Naive thymus-derived CD4-positive, alpha-beta T cell (primary cell): ENCODE measurements at regions of chr19 and their contacts with region 1.

Region 1: GRCh38 chr19:38315657-38316476 is at the start of gene YIF1B:
- DNase-seq: peak; percentile 93 to 97 (median 95)
- ATAC-seq: peak; percentile 95
- H3K4me3 ChIP-seq: peak within 1 kb of the TSS; percentile 90
- H3K4me3 Mint-ChIP-seq: peak within 1 kb of the TSS; percentile 87 to 96 (median 91)
- H3K27ac ChIP-seq: peak within 1 kb of the TSS; percentile 97
- H3K27ac Mint-ChIP-seq: peak within 1 kb of the TSS; percentile 90 to 97 (median 93)
- H3K4me1 ChIP-seq: peaks cover 14 to 30% of the 10 kb centered on the region in 2 donors
- H3K4me1 Mint-ChIP-seq: peaks cover 29 to 57% (median 48%) of the 10 kb centered on the region in 7 donors
- H3K27me3 ChIP-seq: no peaks in the 10 kb centered on the region
- H3K27me3 Mint-ChIP-seq: no peaks in the 10 kb centered on the region
- total RNA-seq, gene YIF1B: 26.1 to 84.7 (median 38.0) TPM

Region 2: GRCh38 chr19:38049105-38049649 is 266.7 kb before region 1 on chr19:
- CTCF ChIA-PET with region 1: no interaction called
- POLR2A ChIA-PET with region 1: no interaction called
- intact Hi-C with region 1: loop called (anchors 5 kb)
- DNase-seq: peak; percentile 20 to 87 (median 82)
- ATAC-seq: peak; percentile 89
- H3K4me3 ChIP-seq: peak overlapping the region; percentile 19
- H3K4me3 Mint-ChIP-seq: peak overlapping the region; percentile 71 to 91 (median 85)
- H3K27ac ChIP-seq: peak overlapping the region; percentile 74
- H3K27ac Mint-ChIP-seq: peak overlapping the region; percentile 94 to 100 (median 97)
- H3K4me1 ChIP-seq: peaks cover 20 to 36% of the 10 kb centered on the region in 2 donors
- H3K4me1 Mint-ChIP-seq: peaks cover 22 to 56% (median 44%) of the 10 kb centered on the region in 7 donors
- H3K27me3 ChIP-seq: no peaks in the 10 kb centered on the region
- H3K27me3 Mint-ChIP-seq: peaks cover 0 to 2% (median 0%) of the 10 kb centered on the region in 5 donors

Region 3: GRCh38 chr19:38255383-38256014 is 60.4 kb before region 1 on chr19:
- CTCF ChIA-PET with region 1: no interaction called
- POLR2A ChIA-PET with region 1: no interaction called
- intact Hi-C with region 1: loop called in 1 of 2 experiments (anchors 2 kb)
- DNase-seq: peak in 1 of 9 donors; percentile 30
- ATAC-seq: peak; percentile 10
- H3K4me3 ChIP-seq: no peak overlapping the region
- H3K4me3 Mint-ChIP-seq: peak overlapping the region in 1 of 10 donors; percentile 87
- H3K27ac ChIP-seq: no peak overlapping the region
- H3K27ac Mint-ChIP-seq: peak overlapping the region in 1 of 9 donors; percentile 58
- H3K4me1 ChIP-seq: no peaks in the 10 kb centered on the region
- H3K4me1 Mint-ChIP-seq: peaks cover 0 to 37% (median 0%) of the 10 kb centered on the region in 7 donors
- H3K27me3 ChIP-seq: no peaks in the 10 kb centered on the region
- H3K27me3 Mint-ChIP-seq: peaks cover 12 to 33% (median 24%) of the 10 kb centered on the region in 5 donors

Region 4: GRCh38 chr19:38361633-38362075 is 45.8 kb after region 1 on chr19:
- CTCF ChIA-PET with region 1: no interaction called
- POLR2A ChIA-PET with region 1: no interaction called
- intact Hi-C with region 1: loop called in 1 of 2 experiments (anchors 1 kb)
- DNase-seq: peak in 8 of 9 donors; percentile 17 to 80 (median 34)
- ATAC-seq: peak; percentile 83
- H3K4me3 ChIP-seq: peak overlapping the region; percentile 55
- H3K4me3 Mint-ChIP-seq: peak overlapping the region; percentile 62 to 94 (median 83)
- H3K27ac ChIP-seq: no peak overlapping the region
- H3K27ac Mint-ChIP-seq: no peak overlapping the region
- H3K4me1 ChIP-seq: peaks cover 0 to 6% of the 10 kb centered on the region in 2 donors
- H3K4me1 Mint-ChIP-seq: peaks cover 0 to 21% (median 15%) of the 10 kb centered on the region in 7 donors
- H3K27me3 ChIP-seq: no peaks in the 10 kb centered on the region
- H3K27me3 Mint-ChIP-seq: peaks cover 0 to 38% (median 6%) of the 10 kb centered on the region in 5 donors

Region 5: DNA sequence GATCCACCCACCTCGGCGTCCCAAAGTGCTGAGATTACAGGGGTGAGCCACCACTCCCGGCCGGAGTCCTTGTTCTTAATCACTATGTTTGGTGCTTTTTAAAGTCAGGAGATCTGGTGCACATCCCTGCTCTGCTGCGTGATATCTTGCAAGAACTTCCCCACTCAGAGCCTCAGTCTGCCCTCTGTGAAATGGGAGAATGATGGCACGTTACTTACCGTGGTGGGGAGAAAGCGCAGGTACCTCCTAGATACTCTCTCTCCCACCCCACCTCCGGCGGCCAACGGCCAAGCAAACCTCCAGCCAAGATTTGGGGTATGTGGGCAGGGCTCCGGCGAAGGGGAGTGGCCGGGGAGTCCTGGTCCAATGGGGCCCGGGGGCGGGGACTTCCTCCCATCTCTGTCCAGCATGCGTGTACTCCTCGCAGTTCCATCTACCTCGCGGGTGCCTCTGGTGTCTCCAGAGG is 117.4 kb after region 1 on chr19 and contains the start of gene RYR1:
- CTCF ChIA-PET with region 1: no interaction called
- POLR2A ChIA-PET with region 1: no interaction called
- intact Hi-C with region 1: no loop called
- DNase-seq: peak in 1 of 9 donors; percentile 67
- ATAC-seq: peak; percentile 87
- H3K4me3 ChIP-seq: no peak within 1 kb of the TSS
- H3K4me3 Mint-ChIP-seq: peak within 1 kb of the TSS in 9 of 10 donors; percentile 5 to 70 (median 53)
- H3K27ac ChIP-seq: no peak within 1 kb of the TSS
- H3K27ac Mint-ChIP-seq: no peak within 1 kb of the TSS
- H3K4me1 ChIP-seq: no peaks in the 10 kb centered on the region
- H3K4me1 Mint-ChIP-seq: peaks cover 9 to 20% (median 15%) of the 10 kb centered on the region in 7 donors
- H3K27me3 ChIP-seq: peaks cover 0 to 4% of the 10 kb centered on the region in 2 donors
- H3K27me3 Mint-ChIP-seq: peaks cover 13 to 35% (median 20%) of the 10 kb centered on the region in 5 donors
- total RNA-seq, gene RYR1: 0.29 to 2.6 (median 1.7) TPM

Region 6: DNA sequence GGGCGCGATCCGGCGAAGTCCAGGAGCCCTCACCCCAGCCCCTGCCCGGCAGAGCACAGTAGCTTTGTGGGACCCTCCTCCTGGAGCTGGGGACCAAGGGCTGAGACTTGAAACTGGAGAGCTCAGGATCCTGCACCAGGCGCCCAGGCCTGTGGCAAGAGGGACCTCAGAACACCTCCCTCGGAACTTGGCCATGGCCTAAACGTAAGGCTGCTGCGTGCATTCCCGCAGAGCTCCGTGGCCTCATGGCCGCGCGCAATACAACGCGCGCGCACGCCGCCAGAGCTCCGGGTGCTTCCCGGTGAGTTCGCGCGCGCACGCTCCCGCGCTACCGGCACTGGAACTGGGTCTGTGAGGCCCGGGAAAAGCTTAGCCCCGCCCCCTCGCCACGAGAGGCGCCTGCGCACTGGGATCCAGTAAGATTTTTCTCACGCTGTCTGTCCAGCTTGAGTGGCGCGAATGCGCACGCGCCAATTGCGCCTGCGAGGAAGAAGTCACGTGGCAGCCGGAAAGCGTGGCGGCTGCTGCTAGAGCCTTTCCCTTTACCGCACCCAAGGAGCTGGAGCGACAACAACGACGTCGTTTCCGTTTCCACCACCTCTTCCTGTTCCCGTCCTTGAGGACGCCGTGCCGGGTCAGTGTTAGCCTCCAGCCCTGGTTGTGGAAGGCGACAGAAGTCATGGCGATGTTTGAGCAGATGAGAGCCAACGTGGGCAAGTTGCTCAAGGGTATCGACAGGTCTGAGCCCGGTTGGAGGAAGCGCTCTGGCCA is 302.9 kb after region 1 on chr19 and contains the start of gene EIF3K:
- CTCF ChIA-PET with region 1: no interaction called
- POLR2A ChIA-PET with region 1: no interaction called
- intact Hi-C with region 1: loop called in 1 of 2 experiments (anchors 5 kb)
- DNase-seq: peak; percentile 94 to 99 (median 96)
- ATAC-seq: peak; percentile 86
- H3K4me3 ChIP-seq: peak within 1 kb of the TSS; percentile 96
- H3K4me3 Mint-ChIP-seq: peak within 1 kb of the TSS; percentile 95 to 100 (median 98)
- H3K27ac ChIP-seq: peak within 1 kb of the TSS; percentile 99
- H3K27ac Mint-ChIP-seq: peak within 1 kb of the TSS; percentile 89 to 100 (median 97)
- H3K4me1 ChIP-seq: peaks cover 33 to 40% of the 10 kb centered on the region in 2 donors
- H3K4me1 Mint-ChIP-seq: peaks cover 38 to 61% (median 44%) of the 10 kb centered on the region in 7 donors
- H3K27me3 ChIP-seq: no peaks in the 10 kb centered on the region
- H3K27me3 Mint-ChIP-seq: no peaks in the 10 kb centered on the region
- total RNA-seq, gene EIF3K: 294 to 405 (median 337) TPM

Region 7: DNA sequence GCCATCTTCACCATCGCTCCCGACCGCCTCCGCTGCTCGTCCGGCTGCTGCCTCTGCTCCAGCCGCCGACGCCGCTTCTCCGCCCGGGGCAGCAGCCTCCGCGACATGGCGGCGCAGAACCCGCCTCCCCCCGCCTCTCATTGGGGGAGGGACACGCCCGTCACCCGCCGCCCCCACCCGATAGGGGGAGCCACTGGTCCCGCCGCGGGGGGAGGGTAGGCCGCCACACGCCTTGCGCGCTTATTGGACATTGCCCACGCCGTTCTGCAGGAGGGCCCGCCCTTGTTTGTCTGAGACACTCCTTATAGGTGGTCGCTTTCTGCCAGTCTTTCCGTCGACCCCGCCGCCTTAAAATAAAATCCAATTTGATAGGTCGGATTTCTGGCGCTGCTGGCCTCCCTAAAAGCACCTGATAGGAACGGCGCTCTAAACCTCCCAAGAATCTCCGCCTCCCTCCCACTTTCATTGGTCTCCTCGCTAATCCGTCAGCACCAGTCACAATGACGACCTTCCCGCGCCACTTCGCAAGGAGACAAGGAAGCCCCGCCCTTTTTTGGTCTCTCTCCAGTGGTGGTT is 534.1 kb after region 1 on chr19 and contains the start of gene HNRNPL:
- CTCF ChIA-PET with region 1: no interaction called
- POLR2A ChIA-PET with region 1: no interaction called
- intact Hi-C with region 1: loop called in 1 of 2 experiments (anchors 1 kb)
- DNase-seq: peak; percentile 99 to 100 (median 100)
- ATAC-seq: peak; percentile 78
- H3K4me3 ChIP-seq: peak within 1 kb of the TSS; percentile 81
- H3K4me3 Mint-ChIP-seq: peak within 1 kb of the TSS; percentile 88 to 99 (median 96)
- H3K27ac ChIP-seq: peak within 1 kb of the TSS; percentile 96
- H3K27ac Mint-ChIP-seq: peak within 1 kb of the TSS; percentile 94 to 100 (median 99)
- H3K4me1 ChIP-seq: peaks cover 24 to 41% of the 10 kb centered on the region in 2 donors
- H3K4me1 Mint-ChIP-seq: peaks cover 30 to 67% (median 50%) of the 10 kb centered on the region in 7 donors
- H3K27me3 ChIP-seq: no peaks in the 10 kb centered on the region
- H3K27me3 Mint-ChIP-seq: peaks cover 0 to 5% (median 0%) of the 10 kb centered on the region in 5 donors
- total RNA-seq, gene HNRNPL: 339 to 539 (median 505) TPM